CD8-positive, alpha-beta T cell (primary cell): ENCODE measurements at regions of chr19 and their contacts with region 1.

Region 1: GRCh38 chr19:2151339-2152229 is at the start of gene AP3D1:
- DNase-seq: peak; percentile 100
- ATAC-seq: peak; percentile 91
- H3K4me3 ChIP-seq: peak within 1 kb of the TSS; percentile 60 to 87
- H3K4me3 Mint-ChIP-seq: peak within 1 kb of the TSS; percentile 85
- H3K27ac ChIP-seq: peak within 1 kb of the TSS; percentile 78 to 79
- H3K27ac Mint-ChIP-seq: peak within 1 kb of the TSS; percentile 90
- H3K4me1 ChIP-seq: peaks cover 36% of the 10 kb centered on the region
- H3K4me1 Mint-ChIP-seq: peaks cover 35% of the 10 kb centered on the region
- H3K27me3 ChIP-seq: no peaks in the 10 kb centered on the region
- H3K27me3 Mint-ChIP-seq: no peaks in the 10 kb centered on the region
- CTCF ChIP-seq: no peak
- total RNA-seq, gene AP3D1: 39.4 to 42.5 TPM

Region 2: DNA sequence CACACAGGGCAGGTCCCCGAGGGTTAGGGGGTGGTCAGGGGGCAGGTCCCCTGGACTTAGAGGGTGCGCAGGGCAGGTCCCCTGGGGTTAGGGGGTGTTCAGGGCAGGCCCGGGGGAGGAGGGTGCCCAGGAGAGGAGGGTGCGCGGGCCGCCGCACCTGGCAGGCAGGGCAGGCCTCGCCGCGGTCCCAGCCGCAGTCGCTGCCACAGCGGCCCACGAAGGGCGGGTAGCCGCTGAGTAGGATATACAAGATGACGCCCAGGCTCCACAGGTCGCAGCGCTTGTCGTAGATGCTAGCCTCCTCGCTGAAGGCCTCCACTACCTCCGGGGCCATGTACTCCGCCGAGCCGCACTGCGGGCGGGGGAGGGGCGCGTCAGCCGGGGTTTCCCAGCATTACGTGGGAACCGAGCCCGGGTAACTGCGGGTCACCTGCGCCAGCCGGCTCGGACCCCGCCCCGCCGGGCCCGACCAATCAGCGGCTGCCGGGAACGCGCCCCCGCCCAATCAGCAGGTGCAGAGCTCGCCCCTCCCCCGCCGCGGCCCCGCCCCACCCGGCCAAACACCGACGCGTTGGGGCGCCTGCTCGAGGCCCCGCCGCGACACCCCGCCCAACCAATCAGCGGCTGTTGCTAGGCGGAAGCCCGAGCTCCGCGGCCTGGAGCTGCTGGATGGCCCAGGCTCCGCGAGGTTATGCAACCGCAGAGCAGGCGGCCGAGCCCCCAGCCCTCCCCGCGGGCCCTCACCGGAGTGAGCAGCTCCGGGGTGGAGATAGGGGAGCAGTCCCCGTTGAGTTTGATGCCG is 109.7 kb before region 1 on chr19:
- CTCF ChIA-PET with region 1: interaction called, 3 read pairs
- POLR2A ChIA-PET with region 1: no interaction called
- intact Hi-C with region 1: loop called in 1 of 2 experiments (anchors 2 kb)
- DNase-seq: peak; percentile 99 to 100 (median 100)
- ATAC-seq: peak; percentile 85
- H3K4me3 ChIP-seq: peak overlapping the region; percentile 28 to 62
- H3K4me3 Mint-ChIP-seq: peak overlapping the region; percentile 65
- H3K27ac ChIP-seq: peak overlapping the region; percentile 96 to 100
- H3K27ac Mint-ChIP-seq: peak overlapping the region; percentile 93
- H3K4me1 ChIP-seq: peaks cover 54% of the 10 kb centered on the region
- H3K4me1 Mint-ChIP-seq: peaks cover 28% of the 10 kb centered on the region
- H3K27me3 ChIP-seq: no peaks in the 10 kb centered on the region
- H3K27me3 Mint-ChIP-seq: no peaks in the 10 kb centered on the region
- CTCF ChIP-seq: no peak

Region 3: DNA sequence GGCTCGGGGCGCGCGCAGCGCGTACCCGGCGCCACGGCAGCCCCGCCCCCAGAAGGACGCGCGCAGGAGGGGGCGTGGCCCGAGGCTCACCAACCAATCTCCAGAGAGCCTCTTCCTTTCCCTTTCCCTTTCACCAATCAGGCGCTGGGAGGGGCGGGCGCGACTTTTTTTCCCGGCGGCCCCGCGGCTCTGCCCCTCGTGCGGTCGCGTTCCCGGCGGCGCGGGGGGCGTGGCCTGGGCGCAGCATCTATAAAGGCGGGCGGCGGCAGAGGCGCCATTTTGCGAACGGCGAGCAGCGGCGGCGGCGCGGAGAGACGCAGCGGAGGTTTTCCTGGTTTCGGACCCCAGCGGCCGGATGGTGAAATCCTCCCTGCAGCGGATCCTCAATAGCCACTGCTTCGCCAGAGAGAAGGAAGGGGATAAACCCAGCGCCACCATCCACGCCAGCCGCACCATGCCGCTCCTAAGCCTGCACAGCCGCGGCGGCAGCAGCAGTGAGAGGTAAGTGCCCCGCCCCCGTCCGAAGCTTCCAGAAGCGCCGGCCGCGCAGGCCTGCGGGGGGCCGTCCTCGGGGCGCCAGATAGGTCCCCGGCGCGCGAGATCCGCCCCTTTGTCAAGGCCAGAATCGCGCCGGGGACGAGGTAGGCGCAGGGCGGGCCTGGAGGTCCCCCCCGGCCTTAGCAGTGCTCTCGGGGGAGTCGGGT is 117.8 kb after region 1 on chr19:
- CTCF ChIA-PET with region 1: interaction called, 3 read pairs
- POLR2A ChIA-PET with region 1: no interaction called
- intact Hi-C with region 1: loop called (anchors 1 to 2 kb)
- DNase-seq: peak; percentile 98 to 100 (median 99)
- ATAC-seq: peak; percentile 80
- H3K4me3 ChIP-seq: peak overlapping the region; percentile 82 to 98
- H3K4me3 Mint-ChIP-seq: peak overlapping the region; percentile 91
- H3K27ac ChIP-seq: peak overlapping the region; percentile 80 to 86
- H3K27ac Mint-ChIP-seq: peak overlapping the region; percentile 92
- H3K4me1 ChIP-seq: peaks cover 45% of the 10 kb centered on the region
- H3K4me1 Mint-ChIP-seq: peaks cover 35% of the 10 kb centered on the region
- H3K27me3 ChIP-seq: no peaks in the 10 kb centered on the region
- H3K27me3 Mint-ChIP-seq: no peaks in the 10 kb centered on the region
- CTCF ChIP-seq: no peak

Region 4: DNA sequence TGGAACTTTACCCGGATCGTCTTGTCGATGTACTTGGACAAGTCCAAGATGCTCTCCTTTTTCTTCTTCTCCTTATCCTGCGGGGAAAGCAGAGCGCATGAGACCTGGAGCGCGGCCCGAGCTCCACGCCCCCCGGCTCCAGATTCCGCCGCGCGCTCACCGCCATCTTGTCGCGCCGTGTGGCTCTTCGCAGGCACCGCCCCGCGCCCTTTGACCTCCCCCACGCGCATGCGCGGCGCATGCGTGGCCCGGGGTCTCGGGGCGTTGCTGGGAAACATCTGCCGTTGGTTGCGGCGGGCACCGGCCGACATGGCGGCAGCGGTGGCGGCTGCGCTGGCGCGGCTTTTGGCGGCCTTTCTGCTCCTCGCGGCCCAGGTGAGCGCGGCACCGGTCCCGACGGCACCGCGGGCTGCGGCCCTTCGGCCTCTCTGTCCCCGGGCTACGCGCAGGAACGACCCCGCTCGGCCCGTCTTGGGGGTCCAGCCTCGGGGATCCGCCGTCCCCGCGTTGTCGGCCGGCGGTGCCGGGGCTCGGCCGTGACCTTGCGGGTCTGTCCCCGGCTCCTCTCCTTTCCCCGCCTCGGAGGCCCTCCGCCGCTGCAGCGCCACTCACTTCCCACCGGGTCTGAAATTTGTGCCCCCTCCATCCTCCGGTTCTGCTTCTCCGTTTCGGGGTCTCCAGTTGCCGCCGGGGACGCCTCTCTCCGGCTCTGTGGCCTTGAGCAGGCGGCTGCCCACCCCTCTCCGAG is 177.0 kb after region 1 on chr19 and contains the starts of genes LSM7 and SPPL2B:
- CTCF ChIA-PET with region 1: no interaction called
- POLR2A ChIA-PET with region 1: no interaction called
- intact Hi-C with region 1: loop called in 1 of 2 experiments (anchors 1 kb)
- DNase-seq: peak; percentile 81 to 96 (median 93)
- ATAC-seq: peak; percentile 62
- H3K4me3 ChIP-seq: peak within 1 kb of the TSS; percentile 77 to 93
- H3K4me3 Mint-ChIP-seq: peak within 1 kb of the TSS; percentile 97
- H3K27ac ChIP-seq: peak within 1 kb of the TSS; percentile 71 to 82
- H3K27ac Mint-ChIP-seq: peak within 1 kb of the TSS; percentile 99
- H3K4me1 ChIP-seq: peaks cover 60% of the 10 kb centered on the region
- H3K4me1 Mint-ChIP-seq: peaks cover 62% of the 10 kb centered on the region
- H3K27me3 ChIP-seq: no peaks in the 10 kb centered on the region
- H3K27me3 Mint-ChIP-seq: no peaks in the 10 kb centered on the region
- CTCF ChIP-seq: no peak
- total RNA-seq, gene LSM7: 103 to 113 TPM
- total RNA-seq, gene SPPL2B: 123 to 126 TPM

Region 5: DNA sequence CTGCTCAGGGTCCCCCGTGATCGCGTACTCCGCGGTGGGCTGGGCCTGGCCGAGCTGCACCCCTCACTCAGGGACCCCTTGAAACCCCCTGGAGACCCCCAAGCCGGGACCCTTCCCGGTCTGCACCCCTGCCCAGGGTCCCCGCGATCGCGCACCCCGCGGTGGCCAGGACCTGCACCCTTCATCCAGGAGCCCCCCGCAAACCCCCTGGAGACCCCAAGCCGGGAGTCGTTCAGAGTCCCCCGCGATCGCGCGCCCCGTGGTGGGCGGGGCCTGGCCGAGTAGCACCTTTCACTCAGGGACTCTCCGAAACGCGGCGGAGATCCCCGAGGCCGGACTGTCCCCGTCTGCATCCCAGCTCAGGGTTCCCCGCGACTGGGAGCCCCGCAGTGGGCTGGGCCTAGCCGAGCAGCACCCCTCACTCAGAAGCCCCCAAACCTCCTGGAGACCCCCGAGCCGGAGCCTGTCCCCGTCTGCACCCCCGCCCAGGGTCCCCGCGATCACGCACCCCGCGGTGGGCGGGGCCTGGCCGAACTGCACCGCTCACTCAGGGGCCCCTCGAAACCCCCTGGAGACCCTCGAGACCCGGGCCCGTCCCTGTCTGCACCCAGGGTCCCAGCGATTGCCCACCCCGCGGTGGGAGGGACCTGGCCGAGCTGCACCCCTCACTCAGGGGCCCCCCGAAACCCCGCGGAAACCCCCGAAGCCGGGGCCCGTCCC is 304.4 kb after region 1 on chr19:
- CTCF ChIA-PET with region 1: no interaction called
- POLR2A ChIA-PET with region 1: no interaction called
- intact Hi-C with region 1: loop called in 1 of 2 experiments (anchors 2 kb)
- DNase-seq: peak in 7 of 9 experiments; percentile 22 to 87 (median 52)
- ATAC-seq: peak; percentile 41
- H3K4me3 ChIP-seq: peak overlapping the region; percentile 62 to 80
- H3K4me3 Mint-ChIP-seq: peak overlapping the region; percentile 83
- H3K27ac ChIP-seq: peak overlapping the region; percentile 32 to 50
- H3K27ac Mint-ChIP-seq: peak overlapping the region; percentile 75
- H3K4me1 ChIP-seq: peaks cover 14% of the 10 kb centered on the region
- H3K4me1 Mint-ChIP-seq: peaks cover 13% of the 10 kb centered on the region
- H3K27me3 ChIP-seq: no peaks in the 10 kb centered on the region
- H3K27me3 Mint-ChIP-seq: no peaks in the 10 kb centered on the region
- CTCF ChIP-seq: no peak

Region 6: GRCh38 chr19:2636897-2637683 is 485.5 kb after region 1 on chr19:
- CTCF ChIA-PET with region 1: no interaction called
- POLR2A ChIA-PET with region 1: no interaction called
- intact Hi-C with region 1: loop called in 1 of 2 experiments (anchors 1 kb)
- DNase-seq: peak; percentile 59 to 85 (median 75)
- ATAC-seq: peak; percentile 99
- H3K4me3 ChIP-seq: no peak overlapping the region
- H3K4me3 Mint-ChIP-seq: no peak overlapping the region
- H3K27ac ChIP-seq: no peak overlapping the region
- H3K27ac Mint-ChIP-seq: no peak overlapping the region
- H3K4me1 ChIP-seq: peaks cover 12% of the 10 kb centered on the region
- H3K4me1 Mint-ChIP-seq: peaks cover 9% of the 10 kb centered on the region
- H3K27me3 ChIP-seq: no peaks in the 10 kb centered on the region
- H3K27me3 Mint-ChIP-seq: no peaks in the 10 kb centered on the region
- CTCF ChIP-seq: peak; percentile 70